CD8-positive, alpha-beta T cell (primary cell): ENCODE measurements at regions of chr10 and their contacts with region 1.

Region 1: GRCh38 chr10:101042667-101043355 is 11.8 kb downstream of the SFXN3 start:
- DNase-seq: peak; percentile 50 to 90 (median 80)
- ATAC-seq: peak; percentile 72
- H3K4me3 ChIP-seq: peak overlapping the region; percentile 66 to 71
- H3K4me3 Mint-ChIP-seq: peak overlapping the region; percentile 97
- H3K27ac ChIP-seq: peak overlapping the region; percentile 50 to 76
- H3K27ac Mint-ChIP-seq: peak overlapping the region; percentile 93
- H3K4me1 ChIP-seq: peaks cover 13% of the 10 kb centered on the region
- H3K4me1 Mint-ChIP-seq: peaks cover 20% of the 10 kb centered on the region
- H3K27me3 ChIP-seq: peaks cover 0 to 6% of the 10 kb centered on the region in 2 experiments
- H3K27me3 Mint-ChIP-seq: peaks cover 12% of the 10 kb centered on the region
- CTCF ChIP-seq: no peak

Region 2: GRCh38 chr10:101012525-101013364 is 30.1 kb before region 1 on chr10:
- CTCF ChIA-PET with region 1: interaction called, 10 read pairs
- POLR2A ChIA-PET with region 1: no interaction called
- intact Hi-C with region 1: no loop called
- DNase-seq: peak; percentile 41 to 85 (median 78)
- ATAC-seq: peak; percentile 86
- H3K4me3 ChIP-seq: no peak overlapping the region
- H3K4me3 Mint-ChIP-seq: no peak overlapping the region
- H3K27ac ChIP-seq: no peak overlapping the region
- H3K27ac Mint-ChIP-seq: no peak overlapping the region
- H3K4me1 ChIP-seq: peaks cover 6% of the 10 kb centered on the region
- H3K4me1 Mint-ChIP-seq: peaks cover 13% of the 10 kb centered on the region
- H3K27me3 ChIP-seq: peaks cover 13 to 16% of the 10 kb centered on the region in 2 experiments
- H3K27me3 Mint-ChIP-seq: peaks cover 33% of the 10 kb centered on the region
- CTCF ChIP-seq: peak; percentile 83

Region 3: GRCh38 chr10:101060036-101060950 is 17.5 kb after region 1 on chr10:
- CTCF ChIA-PET with region 1: interaction called, 580 read pairs
- POLR2A ChIA-PET with region 1: interaction called, 8 read pairs
- intact Hi-C with region 1: loop called (anchors 1 kb)
- DNase-seq: peak; percentile 80 to 96 (median 91)
- ATAC-seq: peak; percentile 67
- H3K4me3 ChIP-seq: peak overlapping the region; percentile 85 to 94
- H3K4me3 Mint-ChIP-seq: peak overlapping the region; percentile 98
- H3K27ac ChIP-seq: peak overlapping the region; percentile 55 to 92
- H3K27ac Mint-ChIP-seq: peak overlapping the region; percentile 91
- H3K4me1 ChIP-seq: peaks cover 27% of the 10 kb centered on the region
- H3K4me1 Mint-ChIP-seq: peaks cover 27% of the 10 kb centered on the region
- H3K27me3 ChIP-seq: peaks cover 20 to 27% of the 10 kb centered on the region in 2 experiments
- H3K27me3 Mint-ChIP-seq: peaks cover 18% of the 10 kb centered on the region
- CTCF ChIP-seq: peak; percentile 95

Region 4: GRCh38 chr10:101067356-101068083 is 24.7 kb after region 1 on chr10:
- CTCF ChIA-PET with region 1: interaction called, 580 read pairs
- POLR2A ChIA-PET with region 1: interaction called, 6 read pairs
- intact Hi-C with region 1: loop called (anchors 1 kb)
- DNase-seq: peak; percentile 49 to 86 (median 77)
- ATAC-seq: peak; percentile 82
- H3K4me3 ChIP-seq: peak overlapping the region; percentile 59 to 64
- H3K4me3 Mint-ChIP-seq: peak overlapping the region; percentile 91
- H3K27ac ChIP-seq: no peak overlapping the region
- H3K27ac Mint-ChIP-seq: no peak overlapping the region
- H3K4me1 ChIP-seq: peaks cover 29% of the 10 kb centered on the region
- H3K4me1 Mint-ChIP-seq: peaks cover 18% of the 10 kb centered on the region
- H3K27me3 ChIP-seq: peaks cover 35 to 39% of the 10 kb centered on the region in 2 experiments
- H3K27me3 Mint-ChIP-seq: peaks cover 41% of the 10 kb centered on the region
- CTCF ChIP-seq: peak; percentile 88

Region 5: GRCh38 chr10:101095542-101096213 is 52.9 kb after region 1 on chr10:
- CTCF ChIA-PET with region 1: interaction called, 5 read pairs
- POLR2A ChIA-PET with region 1: no interaction called
- intact Hi-C with region 1: loop called in 1 of 2 experiments (anchors 1 kb)
- DNase-seq: peak; percentile 43 to 80 (median 71)
- ATAC-seq: peak; percentile 97
- H3K4me3 ChIP-seq: no peak overlapping the region
- H3K4me3 Mint-ChIP-seq: no peak overlapping the region
- H3K27ac ChIP-seq: no peak overlapping the region
- H3K27ac Mint-ChIP-seq: no peak overlapping the region
- H3K4me1 ChIP-seq: peaks cover 5% of the 10 kb centered on the region
- H3K4me1 Mint-ChIP-seq: peaks cover 2% of the 10 kb centered on the region
- H3K27me3 ChIP-seq: peaks cover 3 to 11% of the 10 kb centered on the region in 2 experiments
- H3K27me3 Mint-ChIP-seq: peaks cover 51% of the 10 kb centered on the region
- CTCF ChIP-seq: peak; percentile 79